ENCODE measurements at regions of chr2 and their contacts with region 1.

Region 1: DNA sequence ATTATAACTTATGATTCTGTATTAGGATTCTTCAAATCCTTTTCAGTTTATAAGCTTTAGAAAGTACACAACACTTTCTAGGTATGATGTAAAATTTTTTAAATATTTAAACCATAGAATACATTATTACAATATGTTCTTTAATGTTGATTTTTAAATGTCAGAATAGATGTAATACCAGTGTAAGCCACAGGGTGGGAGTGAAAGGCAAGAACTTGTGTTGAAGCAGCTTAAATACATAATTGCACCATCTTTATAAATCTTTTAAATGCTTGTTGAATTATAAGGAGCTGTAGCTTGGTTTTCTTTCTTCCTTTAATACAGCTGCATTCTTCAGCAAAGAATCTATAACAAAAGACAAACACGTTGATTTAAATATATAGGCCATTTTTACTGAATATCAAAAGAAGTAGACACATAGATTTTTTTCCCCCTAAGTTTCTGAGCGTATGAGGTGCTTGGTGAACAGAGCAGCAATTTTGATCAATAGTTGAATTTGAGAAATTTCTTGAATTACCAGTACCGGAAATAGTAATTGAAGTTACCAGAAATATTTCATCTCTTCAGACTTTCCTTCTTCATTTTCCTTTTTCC is 63.0 kb downstream of the TANK start:
- DNase-seq: no peak
- H3K4me3 ChIP-seq: no peak overlapping the region
- H3K27ac ChIP-seq: no peak overlapping the region
- H3K4me1 ChIP-seq: no peaks in the 10 kb centered on the region
- H3K27me3 ChIP-seq: no peaks in the 10 kb centered on the region
- CTCF ChIP-seq: peak; percentile 79

Region 2: GRCh38 chr2:161104054-161104553 is 119.1 kb before region 1 on chr2:
- CTCF ChIA-PET with region 1: no interaction called
- POLR2A ChIA-PET with region 1: no interaction called
- intact Hi-C with region 1: no loop called
- DNase-seq: no peak
- H3K4me3 ChIP-seq: no peak overlapping the region
- H3K27ac ChIP-seq: no peak overlapping the region
- H3K4me1 ChIP-seq: peaks cover 20% of the 10 kb centered on the region
- H3K27me3 ChIP-seq: no peaks in the 10 kb centered on the region
- CTCF ChIP-seq: no peak

Region 3: GRCh38 chr2:161273038-161273760 is 50.0 kb after region 1 on chr2:
- CTCF ChIA-PET with region 1: no interaction called
- POLR2A ChIA-PET with region 1: no interaction called
- intact Hi-C with region 1: loop called (anchors 5 kb)
- DNase-seq: peak in 1 of 2 experiments; percentile 41
- H3K4me3 ChIP-seq: no peak overlapping the region
- H3K27ac ChIP-seq: no peak overlapping the region
- H3K4me1 ChIP-seq: no peaks in the 10 kb centered on the region
- H3K27me3 ChIP-seq: no peaks in the 10 kb centered on the region
- CTCF ChIP-seq: peak; percentile 74

Measured in PC-9 (cell line).